Heart right ventricle (tissue), 16 donors: ENCODE measurements at regions of chr12 and their contacts with region 1.

Region 1: DNA sequence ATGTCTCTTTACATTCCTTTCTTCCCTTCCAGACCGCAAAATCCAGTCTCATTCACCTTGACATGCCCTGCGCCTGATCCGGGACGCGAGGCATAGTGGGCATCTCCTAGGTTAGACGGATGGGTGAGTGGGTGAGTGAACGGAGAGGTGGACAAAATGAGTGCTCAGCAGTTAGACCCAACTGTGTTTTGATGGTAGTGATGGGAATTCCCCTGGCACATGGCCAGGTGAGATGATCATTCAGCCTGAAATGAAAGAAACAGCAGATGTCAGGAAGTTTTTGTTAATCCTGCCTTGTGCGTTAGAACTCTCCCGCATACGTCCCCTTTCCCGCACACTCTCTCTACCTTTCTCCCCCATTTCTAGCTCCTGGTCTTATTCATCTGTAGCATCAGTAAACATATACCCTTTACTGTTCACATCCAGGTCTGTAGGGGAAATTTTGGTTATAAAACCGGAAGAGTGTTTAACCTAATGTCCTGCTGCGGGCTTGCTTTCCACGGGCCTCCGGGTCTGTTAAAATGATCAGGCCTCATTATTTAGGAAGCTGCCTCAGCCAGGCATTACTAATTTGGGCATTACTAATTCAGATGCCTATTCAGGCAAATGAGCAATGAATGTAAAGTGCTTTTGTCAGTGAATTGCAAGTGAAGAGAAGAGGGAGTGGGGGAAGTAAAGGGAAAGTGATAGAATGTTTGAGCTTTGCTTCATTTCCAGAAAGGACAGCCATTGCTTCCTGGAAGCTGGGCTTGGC is 172.8 kb downstream of the ETV6 start:
- DNase-seq: no peak
- ATAC-seq: peak in 3 of 8 donors; percentile 18 to 34 (median 26)
- H3K4me3 ChIP-seq: no peak overlapping the region
- H3K27ac ChIP-seq: peak overlapping the region in 4 of 10 donors; percentile 17 to 80 (median 36)
- H3K4me1 ChIP-seq: peaks cover 0 to 49% (median 20%) of the 10 kb centered on the region in 9 donors
- H3K27me3 ChIP-seq: no peaks in the 10 kb centered on the region
- CTCF ChIP-seq: no peak

Region 2: DNA sequence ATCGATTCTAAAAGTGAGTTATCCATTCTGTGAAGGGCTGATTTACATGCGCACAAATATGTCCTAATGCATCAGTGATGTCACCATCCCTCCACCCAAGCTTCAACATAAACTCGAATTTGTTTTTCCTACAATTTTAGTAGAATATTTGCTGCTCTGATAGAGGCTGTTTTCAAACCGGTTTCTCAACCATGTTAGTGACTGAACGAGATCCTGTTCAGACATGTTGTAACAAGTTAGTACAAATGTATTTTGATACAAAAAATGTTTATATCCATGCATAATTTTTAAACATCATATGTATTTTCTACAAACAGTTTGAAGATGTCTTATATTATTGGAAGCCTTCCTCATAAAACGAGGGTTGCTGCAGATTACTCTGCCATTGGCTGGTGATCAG is 414.2 kb before region 1 on chr12:
- intact Hi-C with region 1: no loop called
- DNase-seq: no peak
- ATAC-seq: no peak
- H3K4me3 ChIP-seq: no peak overlapping the region
- H3K27ac ChIP-seq: no peak overlapping the region
- H3K4me1 ChIP-seq: no peaks in the 10 kb centered on the region
- H3K27me3 ChIP-seq: no peaks in the 10 kb centered on the region
- CTCF ChIP-seq: no peak

Region 3: GRCh38 chr12:11885261-11886038 is 63.2 kb after region 1 on chr12:
- intact Hi-C with region 1: loop called in 1 of 10 experiments (anchors 10 kb)
- DNase-seq: no peak
- ATAC-seq: peak; percentile 40 to 88 (median 80)
- H3K4me3 ChIP-seq: no peak overlapping the region
- H3K27ac ChIP-seq: peak overlapping the region; percentile 23 to 86 (median 67)
- H3K4me1 ChIP-seq: peaks cover 6 to 48% (median 21%) of the 10 kb centered on the region in 9 donors
- H3K27me3 ChIP-seq: no peaks in the 10 kb centered on the region
- CTCF ChIP-seq: no peak